ENCODE measurements at regions of chr3 and their contacts with region 1.

Region 1: GRCh38 chr3:111895079-111895478 is 36.0 kb downstream of the PHLDB2 start:
- DNase-seq: peak; percentile 84
- H3K4me3 ChIP-seq: no peak overlapping the region
- H3K27ac ChIP-seq: no peak overlapping the region
- H3K4me1 ChIP-seq: peaks cover 9% of the 10 kb centered on the region
- H3K27me3 ChIP-seq: no peaks in the 10 kb centered on the region
- CTCF ChIP-seq: peak; percentile 55 to 57
- POLR2A ChIP-seq: no peak

Region 2: GRCh38 chr3:111676211-111677006 is 218.7 kb before region 1 on chr3:
- CTCF ChIA-PET with region 1: no interaction called
- POLR2A ChIA-PET with region 1: no interaction called
- dilution Hi-C with region 1: no loop called
- intact Hi-C with region 1: no loop called
- DNase-seq: peak; percentile 80
- H3K4me3 ChIP-seq: peak overlapping the region in 2 of 3 experiments; percentile 18 to 80
- H3K27ac ChIP-seq: peak overlapping the region; percentile 57
- H3K4me1 ChIP-seq: peaks cover 30% of the 10 kb centered on the region
- H3K27me3 ChIP-seq: no peaks in the 10 kb centered on the region
- CTCF ChIP-seq: no peak
- POLR2A ChIP-seq: no peak

Region 3: DNA sequence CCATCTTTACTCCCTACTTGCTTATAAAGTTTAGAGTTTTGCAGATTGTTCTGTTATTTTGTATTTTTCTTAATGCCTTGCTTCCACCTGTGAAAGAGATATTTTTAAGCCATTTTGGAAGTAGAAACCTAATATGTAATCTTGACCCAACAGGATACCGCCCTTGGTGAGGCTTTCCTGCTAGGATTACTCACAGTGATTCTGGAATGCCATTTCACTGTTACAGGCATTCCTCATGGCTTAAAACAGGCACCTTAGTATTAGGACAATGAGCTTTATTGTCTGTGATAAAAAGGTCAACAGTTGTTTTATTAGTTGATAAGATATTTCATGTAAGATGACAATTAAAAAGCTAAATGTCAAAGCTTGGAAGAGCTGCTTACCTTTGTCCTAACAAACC is 22.2 kb after region 1 on chr3:
- CTCF ChIA-PET with region 1: interaction called, 13 read pairs
- POLR2A ChIA-PET with region 1: no interaction called
- dilution Hi-C with region 1: no loop called
- intact Hi-C with region 1: no loop called
- DNase-seq: peak; percentile 88
- H3K4me3 ChIP-seq: peak overlapping the region in 1 of 3 experiments; percentile 17
- H3K27ac ChIP-seq: peak overlapping the region; percentile 91
- H3K4me1 ChIP-seq: peaks cover 35% of the 10 kb centered on the region
- H3K27me3 ChIP-seq: no peaks in the 10 kb centered on the region
- CTCF ChIP-seq: no peak
- POLR2A ChIP-seq: peak; percentile 25

Region 4: DNA sequence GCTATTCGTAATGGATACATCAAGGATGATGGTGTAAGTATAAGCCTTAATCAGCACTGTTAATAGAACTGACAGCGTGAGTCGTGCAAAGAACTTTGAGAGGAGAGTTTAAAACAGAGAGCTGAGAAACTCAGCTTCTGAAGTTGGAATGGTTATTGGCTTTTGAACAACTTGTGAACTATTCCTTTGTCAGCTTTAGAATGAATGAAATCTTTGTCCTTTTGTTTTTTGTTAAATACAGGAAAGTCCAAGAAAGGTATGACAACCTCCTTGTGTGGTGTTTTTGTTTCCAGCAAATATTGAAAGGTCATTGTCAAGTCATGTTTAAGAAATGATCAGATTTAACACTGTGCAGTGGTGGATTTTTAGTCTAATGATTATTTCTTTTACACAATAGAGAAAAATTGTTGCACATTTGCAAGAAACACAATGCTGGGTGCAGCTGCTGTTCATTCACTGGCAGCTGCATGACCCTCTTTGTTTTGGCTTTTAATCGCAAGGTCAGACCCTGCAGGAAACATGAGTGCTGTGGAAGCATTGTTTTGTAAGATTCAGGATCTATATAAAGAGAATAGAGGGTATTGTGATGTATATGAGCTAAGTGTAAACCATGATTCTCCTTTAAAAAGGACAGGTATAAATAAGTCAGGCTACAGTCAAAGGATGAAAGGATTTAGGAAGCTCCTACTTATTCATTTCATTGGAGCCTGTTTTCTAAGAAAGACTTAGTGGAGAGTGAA is 62.1 kb after region 1 on chr3:
- CTCF ChIA-PET with region 1: interaction called, 10 read pairs
- POLR2A ChIA-PET with region 1: no interaction called
- dilution Hi-C with region 1: no loop called
- intact Hi-C with region 1: no loop called
- DNase-seq: peak; percentile 91
- H3K4me3 ChIP-seq: no peak overlapping the region
- H3K27ac ChIP-seq: peak overlapping the region; percentile 57
- H3K4me1 ChIP-seq: peaks cover 28% of the 10 kb centered on the region
- H3K27me3 ChIP-seq: no peaks in the 10 kb centered on the region
- CTCF ChIP-seq: no peak
- POLR2A ChIP-seq: no peak

Region 5: GRCh38 chr3:111989061-111989678 is 94.1 kb after region 1 on chr3:
- CTCF ChIA-PET with region 1: interaction called, 16 read pairs
- POLR2A ChIA-PET with region 1: no interaction called
- dilution Hi-C with region 1: no loop called
- intact Hi-C with region 1: no loop called
- DNase-seq: peak; percentile 72
- H3K4me3 ChIP-seq: no peak overlapping the region
- H3K27ac ChIP-seq: no peak overlapping the region
- H3K4me1 ChIP-seq: no peaks in the 10 kb centered on the region
- H3K27me3 ChIP-seq: no peaks in the 10 kb centered on the region
- CTCF ChIP-seq: peak; percentile 55 to 60
- POLR2A ChIP-seq: no peak

Measured in endothelial cell of umbilical vein (primary cell).